WTC11 (cell line): ENCODE measurements at regions of chr6 and their contacts with region 1.

Region 1: GRCh38 chr6:52063584-52064344 is 23.6 kb downstream of the PKHD1 start:
- DNase-seq: peak; percentile 52
- ATAC-seq: peak; percentile 93
- H3K4me3 Mint-ChIP-seq: no peak overlapping the region
- H3K27ac Mint-ChIP-seq: peak overlapping the region; percentile 74
- H3K4me1 Mint-ChIP-seq: peaks cover 19% of the 10 kb centered on the region
- H3K27me3 Mint-ChIP-seq: no peaks in the 10 kb centered on the region; the same call in 1 of the 2 replicates
- CTCF ChIP-seq: 0 out of 2 replicates have a peak, but pooled peaks have one; percentile 22

Region 2: GRCh38 chr6:52049252-52050050 is 14.3 kb before region 1 on chr6:
- CTCF ChIA-PET with region 1: interaction called, 14 read pairs
- POLR2A ChIA-PET with region 1: no interaction called
- DNase-seq: no peak
- ATAC-seq: peak; percentile 50; the same call in 1 of the 2 replicates
- H3K4me3 Mint-ChIP-seq: no peak overlapping the region
- H3K27ac Mint-ChIP-seq: no peak overlapping the region
- H3K4me1 Mint-ChIP-seq: peaks cover 9% of the 10 kb centered on the region
- H3K27me3 Mint-ChIP-seq: no peaks in the 10 kb centered on the region
- CTCF ChIP-seq: peak; percentile 39

Region 3: DNA sequence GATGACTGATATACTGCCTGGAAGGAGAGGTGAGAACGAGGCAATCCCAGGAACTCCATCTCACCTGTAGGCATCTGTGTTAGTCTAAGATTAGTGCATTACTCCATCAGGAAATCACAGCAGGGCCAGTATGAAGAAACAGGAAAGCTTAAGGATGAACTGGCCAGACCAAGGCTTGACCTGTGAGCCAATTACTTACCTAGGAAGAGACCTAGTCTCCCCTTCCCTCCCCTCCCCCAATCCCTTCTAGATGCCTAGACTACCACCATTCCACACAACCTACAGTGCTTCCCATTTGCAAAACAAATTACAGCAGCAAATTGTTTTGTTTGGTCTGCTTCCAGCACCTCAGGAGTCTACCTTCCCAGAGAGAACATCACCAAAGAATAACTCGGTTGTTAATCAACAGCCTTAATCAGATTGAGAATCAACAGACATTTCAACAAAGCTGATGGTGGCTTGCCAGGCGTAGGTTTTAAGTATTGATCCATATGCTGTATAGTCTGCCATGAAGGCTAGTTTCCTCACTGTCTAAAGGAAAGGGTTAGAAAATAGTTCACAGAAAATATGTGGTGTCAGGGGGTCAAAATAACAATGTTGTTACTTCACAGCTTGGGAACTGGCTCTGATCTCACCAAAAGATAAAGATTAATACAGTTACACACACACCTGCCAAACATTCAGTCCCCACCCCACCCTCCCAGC is 13.6 kb after region 1 on chr6:
- CTCF ChIA-PET with region 1: interaction called, 10 read pairs
- POLR2A ChIA-PET with region 1: no interaction called
- DNase-seq: no peak
- ATAC-seq: peak; percentile 90
- H3K4me3 Mint-ChIP-seq: peak overlapping the region; percentile 45
- H3K27ac Mint-ChIP-seq: peak overlapping the region; percentile 96
- H3K4me1 Mint-ChIP-seq: peaks cover 71% of the 10 kb centered on the region
- H3K27me3 Mint-ChIP-seq: peaks cover 6% of the 10 kb centered on the region; the same call in 1 of the 2 replicates
- CTCF ChIP-seq: no peak